ENCODE measurements at regions of chr3 and their contacts with region 1.

Region 1: GRCh38 chr3:186540221-186540834 is 3.9 kb downstream of the CRYGS start:
- DNase-seq: peak; percentile 63 to 69
- H3K4me3 ChIP-seq: peak overlapping the region in 1 of 2 donors; percentile 22
- H3K27ac ChIP-seq: no peak overlapping the region
- H3K4me1 ChIP-seq: no peaks in the 10 kb centered on the region
- H3K27me3 ChIP-seq: no peaks in the 10 kb centered on the region
- CTCF ChIP-seq: peak; percentile 66 to 80 (median 72)
- POLR2A ChIP-seq: no peak

Region 2: DNA sequence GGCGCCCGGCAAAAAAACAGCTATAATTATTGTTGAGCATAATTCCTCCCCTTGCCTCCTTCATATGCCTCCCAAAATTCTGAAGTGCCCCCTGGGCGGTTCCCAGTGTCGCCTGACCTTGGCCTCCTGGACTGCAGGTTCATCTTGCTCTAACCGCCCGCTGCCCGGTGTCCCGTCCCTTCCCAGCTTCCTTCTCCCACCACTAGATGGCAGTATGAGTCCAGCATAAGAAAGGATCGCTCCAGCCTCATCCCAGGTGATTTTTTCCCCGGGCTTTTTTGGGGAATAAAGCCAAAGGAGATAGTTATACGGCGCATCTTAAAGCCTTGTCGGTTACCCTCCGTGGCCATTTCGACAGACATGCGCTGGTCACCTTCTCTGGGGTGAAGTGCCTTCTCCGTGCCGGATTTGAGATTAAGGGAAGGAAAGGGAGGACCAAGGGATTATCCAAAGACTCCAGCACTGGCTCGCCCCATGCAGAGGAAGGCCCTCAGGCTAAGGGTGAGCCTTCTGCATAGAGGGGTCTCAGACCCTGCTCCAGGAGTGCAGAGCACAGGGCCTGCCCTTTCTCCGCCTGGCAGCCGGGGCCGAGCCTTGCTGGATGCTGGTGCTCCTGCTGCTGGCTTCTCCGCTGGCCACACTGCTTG is 556.7 kb before region 1 on chr3:
- intact Hi-C with region 1: loop called (anchors 5 kb)
- DNase-seq: peak; percentile 64 to 73
- H3K4me3 ChIP-seq: no peak overlapping the region
- H3K27ac ChIP-seq: no peak overlapping the region
- H3K4me1 ChIP-seq: no peaks in the 10 kb centered on the region
- H3K27me3 ChIP-seq: no peaks in the 10 kb centered on the region
- CTCF ChIP-seq: peak; percentile 83 to 92 (median 85)
- POLR2A ChIP-seq: no peak

Region 3: DNA sequence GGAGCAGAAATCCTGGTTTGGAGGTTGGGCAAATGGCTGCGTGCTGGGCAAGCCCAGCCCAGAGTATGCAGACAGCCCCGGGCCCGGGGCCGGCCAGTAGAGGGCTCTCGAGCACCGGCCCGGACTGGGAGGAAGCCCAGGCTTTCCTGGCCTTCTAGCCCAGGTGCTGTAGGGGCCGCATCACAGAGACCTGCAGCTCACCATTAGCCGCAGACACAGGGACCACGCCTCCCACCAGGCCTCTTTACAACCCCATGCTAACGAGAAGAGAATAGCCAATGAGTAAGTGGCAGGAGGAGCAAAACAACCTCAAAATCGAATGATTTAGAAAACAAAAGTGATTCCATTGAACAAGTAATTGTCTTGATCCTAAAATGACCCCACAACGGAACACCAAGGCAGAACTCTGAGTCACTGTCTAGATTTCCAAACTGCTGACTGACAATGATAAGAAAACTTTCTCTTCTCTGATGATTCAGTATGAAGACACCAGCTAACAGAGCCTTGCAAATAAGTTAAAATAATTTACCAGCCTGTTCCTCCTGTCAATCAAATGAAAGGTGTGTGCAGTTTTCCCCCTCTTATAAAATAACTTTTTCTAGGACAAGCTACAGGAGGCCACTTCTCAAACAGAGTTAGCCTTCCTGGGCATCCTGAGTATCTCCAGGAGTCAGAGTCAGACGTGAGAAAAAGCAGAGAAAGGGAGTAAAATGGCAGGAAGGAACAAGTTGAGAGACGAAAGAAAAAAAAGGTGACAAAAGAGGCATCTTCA is 280.5 kb before region 1 on chr3:
- intact Hi-C with region 1: loop called (anchors 10 kb)
- DNase-seq: peak; percentile 30 to 53
- H3K4me3 ChIP-seq: no peak overlapping the region
- H3K27ac ChIP-seq: no peak overlapping the region
- H3K4me1 ChIP-seq: no peaks in the 10 kb centered on the region
- H3K27me3 ChIP-seq: no peaks in the 10 kb centered on the region
- CTCF ChIP-seq: peak; percentile 66 to 75 (median 70)
- POLR2A ChIP-seq: no peak